Posterior vena cava (tissue), 2 donors: ENCODE measurements at regions of chr5 and their contacts with region 1.

Region 1: DNA sequence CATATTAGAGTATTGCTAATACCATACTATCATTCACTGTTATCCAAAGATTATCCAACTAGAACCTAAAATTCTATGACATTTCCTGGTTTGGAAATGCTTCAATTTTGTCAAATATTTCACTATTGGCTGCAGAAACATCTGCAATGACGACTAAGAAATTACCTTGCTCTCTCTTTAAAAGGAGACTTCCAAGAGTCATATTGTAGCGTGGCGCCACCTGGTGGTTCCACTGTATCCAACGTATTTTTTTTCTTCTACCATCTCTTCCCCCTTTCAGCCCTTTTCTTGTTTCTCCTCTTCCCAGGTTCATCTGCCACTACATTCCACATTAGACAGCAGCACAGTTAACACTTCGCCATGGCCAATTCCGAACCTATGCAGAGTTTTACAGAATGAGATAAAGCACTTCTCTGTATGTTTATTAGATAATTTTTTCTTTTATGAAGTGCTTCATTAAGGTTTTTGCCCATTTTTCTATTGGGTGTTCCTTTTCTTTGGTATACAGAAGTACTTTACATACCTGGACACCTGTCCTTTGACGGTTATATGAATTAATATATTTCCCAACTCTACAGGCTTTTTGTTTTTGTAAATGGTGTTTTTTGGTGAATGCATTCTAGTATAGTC is 153.5 kb downstream of the CDC42SE2 start:
- DNase-seq: peak; percentile 92

Region 2: GRCh38 chr5:131165119-131165727 is 252.1 kb before region 1 on chr5 and contains the start of gene HINT1:
- intact Hi-C with region 1: loop called in 1 of 2 experiments (anchors 10 kb)
- DNase-seq: peak; percentile 97
- total RNA-seq, gene HINT1: 129 to 156 TPM

Region 3: DNA sequence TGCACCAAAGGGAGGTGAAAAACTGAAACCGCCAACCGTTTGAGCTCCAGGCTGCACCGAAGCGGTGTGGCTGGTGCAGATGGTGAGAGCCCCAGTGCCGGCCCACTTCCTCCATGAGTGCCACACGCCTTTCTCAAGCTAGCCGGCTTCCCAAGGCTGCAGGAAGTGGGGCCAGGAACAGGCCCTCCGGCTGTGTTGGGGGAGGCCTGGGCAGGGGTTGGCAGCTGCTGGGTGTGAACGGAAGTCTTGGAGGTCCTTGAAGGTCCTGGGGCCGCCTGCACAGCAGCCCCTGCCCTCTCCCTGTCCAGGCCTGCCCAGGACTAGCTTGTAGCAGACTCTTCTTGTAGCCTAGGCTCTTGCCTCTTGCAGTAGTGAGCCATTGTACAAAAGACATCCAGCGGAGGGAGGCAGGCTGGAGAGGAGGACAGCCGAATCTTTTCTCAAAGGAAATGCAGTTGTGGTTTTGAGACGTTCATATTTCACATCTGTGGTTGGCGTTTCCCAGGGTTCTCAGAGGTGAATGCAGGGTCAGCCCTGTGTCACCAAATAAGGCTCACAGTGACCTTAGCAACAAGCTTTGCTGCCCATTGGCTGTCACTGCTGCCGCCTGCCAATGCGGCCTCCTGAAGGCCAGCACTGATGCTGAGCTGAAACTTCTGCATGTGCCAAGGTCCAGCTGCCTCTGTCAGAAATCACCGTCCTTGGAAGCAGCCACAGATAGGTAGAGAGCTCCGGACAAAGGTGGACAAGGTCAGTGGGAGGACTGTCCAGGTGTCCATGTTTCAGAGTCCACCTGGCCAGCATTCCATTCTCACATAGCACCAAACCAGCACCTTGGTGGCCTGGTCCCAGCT is 1049.3 kb after region 1 on chr5:
- intact Hi-C with region 1: no loop called
- DNase-seq: peak; percentile 84